CD8-positive, alpha-beta T cell (primary cell): ENCODE measurements at regions of chr19 and their contacts with region 1.

Region 1: GRCh38 chr19:33373701-33374421 is at the start of gene CEBPG:
- DNase-seq: peak in 8 of 9 experiments; percentile 21 to 86 (median 56)
- ATAC-seq: peak; percentile 37
- H3K4me3 ChIP-seq: peak within 1 kb of the TSS; percentile 90 to 91
- H3K4me3 Mint-ChIP-seq: peak within 1 kb of the TSS; percentile 84
- H3K27ac ChIP-seq: peak within 1 kb of the TSS; percentile 77 to 86
- H3K27ac Mint-ChIP-seq: peak within 1 kb of the TSS; percentile 88
- H3K4me1 ChIP-seq: peaks cover 15% of the 10 kb centered on the region
- H3K4me1 Mint-ChIP-seq: peaks cover 46% of the 10 kb centered on the region
- H3K27me3 ChIP-seq: no peaks in the 10 kb centered on the region
- H3K27me3 Mint-ChIP-seq: no peaks in the 10 kb centered on the region
- CTCF ChIP-seq: no peak
- total RNA-seq, gene CEBPG: 14.4 to 17.2 TPM

Region 2: DNA sequence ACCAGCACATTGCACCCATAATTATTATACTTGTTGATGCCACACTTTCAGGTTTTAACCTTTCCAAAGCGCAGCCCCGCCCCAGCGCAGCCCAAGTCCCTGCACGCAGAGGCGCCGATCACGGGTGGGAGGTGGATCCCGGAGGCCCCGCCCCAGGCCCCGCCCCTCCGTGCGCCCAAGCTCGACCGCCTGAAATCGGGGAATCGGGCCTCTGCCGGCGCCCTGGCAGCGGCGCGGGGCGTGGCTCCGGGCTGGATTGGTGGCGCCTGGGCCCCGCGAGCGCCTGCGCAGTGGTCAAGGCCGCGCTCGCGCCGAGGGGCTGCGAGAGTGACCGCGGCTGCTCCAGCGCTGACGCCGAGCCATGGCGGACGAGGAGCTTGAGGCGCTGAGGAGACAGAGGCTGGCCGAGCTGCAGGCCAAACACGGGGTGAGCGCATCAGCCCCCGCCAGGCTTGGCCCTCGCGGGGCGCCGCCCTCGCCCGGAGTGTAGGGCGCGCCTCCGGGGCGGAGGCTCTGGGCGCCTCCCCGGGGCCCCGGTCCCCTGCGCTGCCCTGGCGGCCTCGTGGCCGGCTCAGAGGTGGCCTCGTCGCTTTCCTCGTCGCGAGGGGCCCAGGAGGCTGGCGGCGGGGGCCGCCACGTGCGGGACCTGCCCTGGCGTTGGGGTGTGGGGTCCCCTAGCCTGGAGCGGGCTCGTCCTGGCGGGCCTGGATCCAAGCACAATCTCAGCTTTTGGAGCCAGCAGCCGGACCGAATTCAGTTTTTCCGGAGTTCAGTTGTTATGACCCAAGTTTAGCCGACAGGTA is 792.8 kb before region 1 on chr19 and contains the start of gene PDCD5:
- CTCF ChIA-PET with region 1: no interaction called
- POLR2A ChIA-PET with region 1: no interaction called
- intact Hi-C with region 1: loop called in 1 of 2 experiments (anchors 5 kb)
- DNase-seq: peak; percentile 96 to 98 (median 97)
- ATAC-seq: peak; percentile 93
- H3K4me3 ChIP-seq: peak within 1 kb of the TSS; percentile 66 to 87
- H3K4me3 Mint-ChIP-seq: peak within 1 kb of the TSS; percentile 95
- H3K27ac ChIP-seq: peak within 1 kb of the TSS; percentile 57 to 70
- H3K27ac Mint-ChIP-seq: peak within 1 kb of the TSS; percentile 93
- H3K4me1 ChIP-seq: peaks cover 21% of the 10 kb centered on the region
- H3K4me1 Mint-ChIP-seq: peaks cover 35% of the 10 kb centered on the region
- H3K27me3 ChIP-seq: peaks cover 0 to 3% of the 10 kb centered on the region in 2 experiments
- H3K27me3 Mint-ChIP-seq: no peaks in the 10 kb centered on the region
- CTCF ChIP-seq: no peak
- total RNA-seq, gene PDCD5: 24.9 to 26.6 TPM

Region 3: DNA sequence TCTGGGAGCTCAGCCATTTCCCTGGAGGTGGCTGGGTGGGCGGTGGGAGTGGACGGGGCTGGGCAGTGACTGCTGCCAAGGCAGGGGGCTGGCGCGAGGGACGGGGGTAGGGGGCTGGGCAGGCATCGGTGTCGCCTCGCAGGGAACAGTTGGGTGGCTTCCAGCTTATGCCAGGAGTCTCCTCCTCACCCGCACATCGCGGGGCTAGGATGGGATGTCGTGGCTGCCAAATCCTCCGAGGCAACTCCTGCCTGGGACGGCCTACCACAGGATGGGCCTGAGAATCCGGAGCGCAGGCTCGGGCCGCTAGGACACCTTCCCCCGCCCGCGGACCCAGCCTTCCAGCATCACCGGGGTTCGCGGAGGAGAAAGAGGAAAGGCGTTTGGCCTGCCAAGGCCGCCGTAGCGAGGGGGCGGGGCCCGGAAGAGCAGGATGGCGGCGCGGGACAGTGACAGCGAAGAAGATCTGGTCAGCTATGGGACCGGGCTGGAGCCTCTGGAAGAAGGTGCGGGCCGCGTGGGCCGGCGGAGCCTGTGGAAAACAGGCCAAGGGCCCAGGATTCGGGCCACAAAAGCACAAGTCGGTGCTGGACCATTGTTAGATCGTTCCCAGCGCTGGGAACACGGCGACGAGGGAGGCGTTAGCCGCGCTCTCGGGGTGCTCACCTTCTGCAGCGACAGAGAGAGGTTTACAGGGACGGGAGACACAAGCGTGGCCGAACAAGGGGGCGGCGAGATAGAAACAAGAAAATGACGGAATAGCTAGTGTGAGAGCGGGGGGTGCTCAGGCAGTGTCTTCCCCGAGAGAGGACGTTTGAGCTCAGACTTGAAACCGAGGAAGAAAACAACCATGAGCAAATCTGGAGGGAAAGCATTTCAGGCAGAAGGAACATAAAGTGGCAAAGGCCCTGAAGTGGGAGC is 292.8 kb before region 1 on chr19 and contains the start of gene GPATCH1:
- CTCF ChIA-PET with region 1: no interaction called
- POLR2A ChIA-PET with region 1: no interaction called
- intact Hi-C with region 1: no loop called
- DNase-seq: peak; percentile 66 to 89 (median 81)
- ATAC-seq: peak; percentile 96
- H3K4me3 ChIP-seq: peak within 1 kb of the TSS; percentile 76 to 79
- H3K4me3 Mint-ChIP-seq: peak within 1 kb of the TSS; percentile 96
- H3K27ac ChIP-seq: peak within 1 kb of the TSS; percentile 62 to 80
- H3K27ac Mint-ChIP-seq: peak within 1 kb of the TSS; percentile 97
- H3K4me1 ChIP-seq: peaks cover 9% of the 10 kb centered on the region
- H3K4me1 Mint-ChIP-seq: peaks cover 30% of the 10 kb centered on the region
- H3K27me3 ChIP-seq: no peaks in the 10 kb centered on the region
- H3K27me3 Mint-ChIP-seq: no peaks in the 10 kb centered on the region
- CTCF ChIP-seq: no peak
- total RNA-seq, gene GPATCH1: 4.9 to 5.2 TPM

Region 4: GRCh38 chr19:33302175-33302973 is 71.5 kb before region 1 on chr19 and contains the start of gene CEBPA:
- CTCF ChIA-PET with region 1: interaction called, 3 read pairs
- POLR2A ChIA-PET with region 1: interaction called, 4 read pairs
- intact Hi-C with region 1: loop called in 1 of 2 experiments (anchors 1 kb)
- DNase-seq: peak; percentile 23 to 88 (median 42)
- ATAC-seq: peak; percentile 81
- H3K4me3 ChIP-seq: peak within 1 kb of the TSS; percentile 46 to 52
- H3K4me3 Mint-ChIP-seq: peak within 1 kb of the TSS; percentile 67
- H3K27ac ChIP-seq: no peak within 1 kb of the TSS
- H3K27ac Mint-ChIP-seq: no peak within 1 kb of the TSS
- H3K4me1 ChIP-seq: peaks cover 8% of the 10 kb centered on the region
- H3K4me1 Mint-ChIP-seq: peaks cover 6% of the 10 kb centered on the region
- H3K27me3 ChIP-seq: peaks cover 3 to 14% of the 10 kb centered on the region in 2 experiments
- H3K27me3 Mint-ChIP-seq: peaks cover 36% of the 10 kb centered on the region
- CTCF ChIP-seq: no peak
- total RNA-seq, gene CEBPA: 1.7 to 1.9 TPM

Region 5: DNA sequence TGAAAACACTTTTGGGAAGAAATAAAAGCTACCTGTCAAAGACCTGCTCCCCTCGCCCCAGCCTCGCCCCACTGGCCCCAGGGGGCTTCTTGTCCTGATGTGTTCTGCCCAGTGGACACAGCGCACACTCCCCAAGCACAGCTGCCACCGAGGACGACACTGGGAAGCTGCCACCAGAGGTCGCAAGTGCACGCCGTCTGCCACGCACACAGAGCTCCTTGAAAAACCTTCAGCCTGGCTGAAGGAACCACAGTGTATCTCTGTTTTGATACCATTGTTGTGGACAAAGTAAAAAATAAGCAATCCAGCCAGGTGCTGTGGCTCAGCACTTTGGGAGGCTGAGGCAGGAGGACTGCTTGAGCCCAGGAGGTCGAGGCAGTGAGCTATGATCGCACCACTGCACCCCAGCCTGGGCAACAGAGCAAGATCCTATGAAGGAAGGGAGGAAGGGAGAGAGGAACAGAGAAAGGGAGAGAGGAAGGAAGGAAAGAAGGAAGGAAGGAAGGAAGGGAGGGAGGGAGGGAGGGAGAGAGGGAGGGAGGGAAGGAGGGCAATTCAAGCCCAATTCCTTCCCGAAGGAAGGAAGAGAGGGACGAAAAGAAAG is 56.9 kb after region 1 on chr19:
- CTCF ChIA-PET with region 1: interaction called, 4 read pairs
- POLR2A ChIA-PET with region 1: no interaction called
- intact Hi-C with region 1: loop called in 1 of 2 experiments (anchors 1 kb)
- DNase-seq: peak; percentile 20 to 76 (median 61)
- ATAC-seq: peak; percentile 74
- H3K4me3 ChIP-seq: no peak overlapping the region
- H3K4me3 Mint-ChIP-seq: peak overlapping the region; percentile 68
- H3K27ac ChIP-seq: peak overlapping the region in 1 of 2 experiments; percentile 29
- H3K27ac Mint-ChIP-seq: peak overlapping the region; percentile 89
- H3K4me1 ChIP-seq: peaks cover 6% of the 10 kb centered on the region
- H3K4me1 Mint-ChIP-seq: peaks cover 12% of the 10 kb centered on the region
- H3K27me3 ChIP-seq: no peaks in the 10 kb centered on the region
- H3K27me3 Mint-ChIP-seq: no peaks in the 10 kb centered on the region
- CTCF ChIP-seq: peak; percentile 69

Region 6: GRCh38 chr19:34134190-34135053 is 760.6 kb after region 1 on chr19:
- CTCF ChIA-PET with region 1: no interaction called
- POLR2A ChIA-PET with region 1: no interaction called
- intact Hi-C with region 1: loop called in 1 of 2 experiments (anchors 2 kb)
- DNase-seq: peak; percentile 80 to 97 (median 92)
- ATAC-seq: peak; percentile 99
- H3K4me3 ChIP-seq: peak overlapping the region; percentile 80 to 89
- H3K4me3 Mint-ChIP-seq: peak overlapping the region; percentile 90
- H3K27ac ChIP-seq: peak overlapping the region; percentile 72 to 81
- H3K27ac Mint-ChIP-seq: peak overlapping the region; percentile 90
- H3K4me1 ChIP-seq: peaks cover 7% of the 10 kb centered on the region
- H3K4me1 Mint-ChIP-seq: peaks cover 11% of the 10 kb centered on the region
- H3K27me3 ChIP-seq: no peaks in the 10 kb centered on the region
- H3K27me3 Mint-ChIP-seq: no peaks in the 10 kb centered on the region
- CTCF ChIP-seq: no peak